ENCODE measurements at regions of chr7 and their contacts with region 1.

Region 1: GRCh38 chr7:18570890-18571478 is 75.4 kb downstream of the HDAC9 start:
- DNase-seq: peak in 1 of 2 donors; percentile 65
- H3K4me3 ChIP-seq: no peak overlapping the region
- H3K27ac ChIP-seq: no peak overlapping the region
- H3K4me1 ChIP-seq: peaks cover 0 to 23% (median 12%) of the 10 kb centered on the region in 4 donors
- H3K27me3 ChIP-seq: no peaks in the 10 kb centered on the region
- CTCF ChIP-seq: peak in 4 of 7 experiments; percentile 13 to 48 (median 40)
- EP300 ChIP-seq: no peak
- POLR2A ChIP-seq: no peak

Region 2: GRCh38 chr7:18352339-18353255 is 218.4 kb before region 1 on chr7:
- intact Hi-C with region 1: loop called (anchors 10 kb)
- DNase-seq: peak; percentile 47 to 84
- H3K4me3 ChIP-seq: no peak overlapping the region
- H3K27ac ChIP-seq: peak overlapping the region in 1 of 5 donors; percentile 0
- H3K4me1 ChIP-seq: peaks cover 0 to 29% (median 13%) of the 10 kb centered on the region in 4 donors
- H3K27me3 ChIP-seq: no peaks in the 10 kb centered on the region
- CTCF ChIP-seq: peak in 5 of 7 experiments; percentile 21 to 67 (median 47)
- EP300 ChIP-seq: no peak
- POLR2A ChIP-seq: no peak

Measured in stomach (tissue), 19 donors.